ENCODE measurements at regions of chr13 and their contacts with region 1.

Region 1: GRCh38 chr13:74683411-74683810 is 549.2 kb upstream of the KLF12 start:
- DNase-seq: no peak
- H3K4me3 ChIP-seq: no peak overlapping the region
- H3K27ac ChIP-seq: no peak overlapping the region
- H3K4me1 ChIP-seq: no peaks in the 10 kb centered on the region
- H3K27me3 ChIP-seq: no peaks in the 10 kb centered on the region
- CTCF ChIP-seq: no peak

Region 2: GRCh38 chr13:73657821-73658540 is 1025.4 kb before region 1 on chr13:
- CTCF ChIA-PET with region 1: no interaction called
- POLR2A ChIA-PET with region 1: interaction called, 10 read pairs
- intact Hi-C with region 1: no loop called
- DNase-seq: no peak
- H3K4me3 ChIP-seq: no peak overlapping the region
- H3K27ac ChIP-seq: no peak overlapping the region
- H3K4me1 ChIP-seq: no peaks in the 10 kb centered on the region
- H3K27me3 ChIP-seq: no peaks in the 10 kb centered on the region
- CTCF ChIP-seq: no peak

Region 3: DNA sequence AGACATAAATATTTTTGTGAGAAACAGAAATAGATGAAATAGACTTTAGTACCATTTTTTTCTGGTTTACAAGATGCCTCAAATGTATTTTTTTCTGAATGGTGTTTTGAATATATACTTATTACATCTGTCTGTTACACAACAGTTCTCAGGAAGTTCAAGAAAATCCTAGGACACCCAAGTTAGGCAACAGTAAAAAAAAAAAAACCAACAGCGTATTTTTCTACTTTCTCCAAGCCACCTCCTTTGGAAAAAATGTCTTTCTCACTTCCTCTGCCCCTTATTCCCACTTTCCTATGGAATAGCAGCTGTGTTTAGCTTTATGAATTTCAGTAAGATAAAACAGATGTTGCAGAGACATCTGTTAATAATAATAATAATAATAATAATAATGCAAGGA is 59.6 kb before region 1 on chr13:
- CTCF ChIA-PET with region 1: no interaction called
- POLR2A ChIA-PET with region 1: no interaction called
- intact Hi-C with region 1: no loop called
- DNase-seq: no peak
- H3K4me3 ChIP-seq: no peak overlapping the region
- H3K27ac ChIP-seq: no peak overlapping the region
- H3K4me1 ChIP-seq: no peaks in the 10 kb centered on the region
- H3K27me3 ChIP-seq: no peaks in the 10 kb centered on the region
- CTCF ChIP-seq: no peak

Region 4: DNA sequence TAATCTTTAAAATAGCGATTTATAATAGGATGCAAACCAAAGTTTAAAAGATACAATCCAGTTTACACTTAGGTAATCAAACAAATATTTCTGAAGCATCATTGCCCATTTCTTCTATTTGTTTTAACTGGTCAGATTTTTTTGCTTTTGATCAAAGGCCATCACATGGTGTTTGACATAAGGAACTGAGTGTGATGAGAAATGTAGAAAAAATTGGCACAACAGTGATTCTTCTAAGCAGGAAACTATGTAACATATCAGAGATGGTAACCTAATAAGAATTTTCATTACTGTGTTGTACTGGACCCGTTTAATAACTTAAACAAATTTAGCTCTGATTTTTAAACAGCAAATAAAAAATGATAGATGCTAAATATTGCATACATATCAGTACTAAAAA is 95.5 kb after region 1 on chr13:
- CTCF ChIA-PET with region 1: no interaction called
- POLR2A ChIA-PET with region 1: no interaction called
- intact Hi-C with region 1: no loop called
- DNase-seq: no peak
- H3K4me3 ChIP-seq: no peak overlapping the region
- H3K27ac ChIP-seq: no peak overlapping the region
- H3K4me1 ChIP-seq: no peaks in the 10 kb centered on the region
- H3K27me3 ChIP-seq: no peaks in the 10 kb centered on the region
- CTCF ChIP-seq: no peak